Mammary epithelial cell (primary cell): ENCODE measurements at regions of chr16 and their contacts with region 1.

Region 1: GRCh38 chr16:87203060-87203656 is 114.0 kb downstream of the C16orf95 start:
- DNase-seq: peak; percentile 24
- H3K4me3 ChIP-seq: no peak overlapping the region
- H3K27ac ChIP-seq: no peak overlapping the region
- H3K4me1 ChIP-seq: peaks cover 24% of the 10 kb centered on the region
- H3K27me3 ChIP-seq: no peaks in the 10 kb centered on the region
- CTCF ChIP-seq: peak; percentile 78 to 88

Region 2: DNA sequence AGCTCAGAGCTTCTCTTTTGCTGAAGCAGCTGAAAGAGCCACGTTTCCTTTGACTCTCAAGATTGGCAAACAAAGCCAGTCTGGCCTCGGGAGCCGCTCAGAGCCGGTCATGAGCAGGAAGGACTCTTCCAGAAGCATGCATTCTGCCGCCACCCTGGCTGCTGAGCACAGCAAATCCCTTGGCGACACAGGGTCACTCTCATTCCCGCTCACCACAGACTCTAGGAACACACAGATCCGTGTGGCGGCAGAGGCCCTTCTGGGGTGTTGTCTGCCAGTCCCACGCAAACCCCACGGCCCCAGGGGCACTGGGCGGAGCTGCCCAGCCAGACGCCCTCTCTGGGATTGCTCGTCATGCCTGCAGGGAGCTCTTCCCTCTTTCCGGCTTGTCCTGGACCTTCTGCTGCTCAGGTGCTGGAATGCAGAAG is 42.9 kb before region 1 on chr16:
- CTCF ChIA-PET with region 1: no interaction called
- dilution Hi-C with region 1: no loop called
- in situ Hi-C with region 1: no loop called
- intact Hi-C with region 1: loop called (anchors 5 kb)
- DNase-seq: peak; percentile 16
- H3K4me3 ChIP-seq: no peak overlapping the region
- H3K27ac ChIP-seq: no peak overlapping the region
- H3K4me1 ChIP-seq: peaks cover 6% of the 10 kb centered on the region
- H3K27me3 ChIP-seq: no peaks in the 10 kb centered on the region
- CTCF ChIP-seq: no peak

Region 3: GRCh38 chr16:87278191-87279095 is 75.3 kb after region 1 on chr16:
- CTCF ChIA-PET with region 1: interaction called, 13 read pairs
- dilution Hi-C with region 1: no loop called
- in situ Hi-C with region 1: no loop called
- intact Hi-C with region 1: loop called (anchors 1 kb)
- DNase-seq: peak; percentile 58
- H3K4me3 ChIP-seq: no peak overlapping the region
- H3K27ac ChIP-seq: no peak overlapping the region
- H3K4me1 ChIP-seq: no peaks in the 10 kb centered on the region
- H3K27me3 ChIP-seq: no peaks in the 10 kb centered on the region
- CTCF ChIP-seq: peak; percentile 85 to 93

Region 4: GRCh38 chr16:87350681-87351319 is 147.6 kb after region 1 on chr16:
- CTCF ChIA-PET with region 1: no interaction called
- dilution Hi-C with region 1: no loop called
- in situ Hi-C with region 1: no loop called
- intact Hi-C with region 1: no loop called
- DNase-seq: no peak
- H3K4me3 ChIP-seq: no peak overlapping the region
- H3K27ac ChIP-seq: no peak overlapping the region
- H3K4me1 ChIP-seq: no peaks in the 10 kb centered on the region
- H3K27me3 ChIP-seq: no peaks in the 10 kb centered on the region
- CTCF ChIP-seq: no peak